ENCODE measurements at regions of chr17 and their contacts with region 1.

Region 1: GRCh38 chr17:39209317-39210092 is 9.4 kb downstream of the RPL19 start:
- DNase-seq: no peak
- H3K4me3 ChIP-seq: peak overlapping the region; percentile 56
- H3K27ac ChIP-seq: peak overlapping the region; percentile 11
- H3K27me3 ChIP-seq: peaks cover under 1% of the 10 kb centered on the region
- CTCF ChIP-seq: no peak

Region 2: DNA sequence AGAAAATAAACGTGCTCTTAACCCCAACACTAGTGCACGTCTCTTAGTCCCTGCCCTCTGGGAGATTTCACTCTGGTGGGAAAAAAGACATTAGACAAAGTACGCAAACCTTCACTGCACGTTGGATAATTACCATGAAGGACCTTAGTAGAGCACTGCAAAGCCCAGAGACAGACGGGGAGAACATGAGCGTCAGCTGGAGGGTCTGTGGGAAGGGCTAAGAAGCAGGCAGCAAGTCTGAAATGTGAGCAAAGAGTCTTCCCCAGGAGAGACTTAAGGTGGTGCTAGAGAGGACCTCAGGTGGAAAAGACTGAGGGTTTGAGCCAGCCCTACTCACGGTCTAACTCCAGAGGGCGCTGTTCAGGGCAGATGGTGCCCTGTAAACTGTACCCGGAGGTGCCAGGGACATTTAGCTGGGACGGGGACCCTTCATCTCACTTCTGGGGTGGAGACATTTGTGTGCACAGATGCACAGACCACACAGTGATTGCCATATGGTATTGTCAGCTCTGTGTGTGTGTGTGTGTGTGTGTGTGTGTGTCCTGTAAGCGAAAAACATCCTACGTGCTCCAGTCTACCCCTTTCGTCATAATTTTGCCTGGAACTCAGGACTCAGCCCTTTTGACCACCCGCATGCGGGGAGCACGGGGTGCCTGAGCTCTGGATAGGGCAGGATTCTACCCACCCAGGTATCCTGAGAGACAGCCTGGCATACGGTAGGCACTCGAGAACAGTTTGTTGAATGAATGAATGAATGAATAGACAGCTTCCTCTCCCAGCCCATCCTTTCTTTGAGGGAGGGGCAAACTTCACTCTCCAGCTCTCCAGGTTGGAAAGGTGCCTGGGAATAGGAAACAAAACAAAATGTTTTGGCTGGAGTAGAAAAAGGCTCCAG is 26.3 kb after region 1 on chr17:
- CTCF ChIA-PET with region 1: interaction called, 12 read pairs
- POLR2A ChIA-PET with region 1: interaction called, 5 read pairs
- DNase-seq: no peak
- H3K4me3 ChIP-seq: no peak overlapping the region
- H3K27ac ChIP-seq: no peak overlapping the region
- H3K27me3 ChIP-seq: no peaks in the 10 kb centered on the region
- CTCF ChIP-seq: peak; percentile 69

Region 3: GRCh38 chr17:39380144-39380543 is 170.6 kb after region 1 on chr17:
- CTCF ChIA-PET with region 1: no interaction called
- POLR2A ChIA-PET with region 1: no interaction called
- DNase-seq: no peak
- H3K4me3 ChIP-seq: no peak overlapping the region
- H3K27ac ChIP-seq: no peak overlapping the region
- H3K27me3 ChIP-seq: no peaks in the 10 kb centered on the region
- CTCF ChIP-seq: no peak

Measured in AG04450 (cell line).